Left ventricle myocardium inferior (tissue), 1 donor: ENCODE measurements at regions of chr5 and their contacts with region 1.

Region 1: GRCh38 chr5:112551419-112552032 is 132.4 kb upstream of the EPB41L4A start:
- DNase-seq: no peak
- H3K4me3 ChIP-seq: no peak overlapping the region
- H3K27ac ChIP-seq: no peak overlapping the region
- H3K4me1 ChIP-seq: peaks cover 8% of the 10 kb centered on the region
- H3K27me3 ChIP-seq: no peaks in the 10 kb centered on the region
- CTCF ChIP-seq: peak; percentile 84

Region 2: DNA sequence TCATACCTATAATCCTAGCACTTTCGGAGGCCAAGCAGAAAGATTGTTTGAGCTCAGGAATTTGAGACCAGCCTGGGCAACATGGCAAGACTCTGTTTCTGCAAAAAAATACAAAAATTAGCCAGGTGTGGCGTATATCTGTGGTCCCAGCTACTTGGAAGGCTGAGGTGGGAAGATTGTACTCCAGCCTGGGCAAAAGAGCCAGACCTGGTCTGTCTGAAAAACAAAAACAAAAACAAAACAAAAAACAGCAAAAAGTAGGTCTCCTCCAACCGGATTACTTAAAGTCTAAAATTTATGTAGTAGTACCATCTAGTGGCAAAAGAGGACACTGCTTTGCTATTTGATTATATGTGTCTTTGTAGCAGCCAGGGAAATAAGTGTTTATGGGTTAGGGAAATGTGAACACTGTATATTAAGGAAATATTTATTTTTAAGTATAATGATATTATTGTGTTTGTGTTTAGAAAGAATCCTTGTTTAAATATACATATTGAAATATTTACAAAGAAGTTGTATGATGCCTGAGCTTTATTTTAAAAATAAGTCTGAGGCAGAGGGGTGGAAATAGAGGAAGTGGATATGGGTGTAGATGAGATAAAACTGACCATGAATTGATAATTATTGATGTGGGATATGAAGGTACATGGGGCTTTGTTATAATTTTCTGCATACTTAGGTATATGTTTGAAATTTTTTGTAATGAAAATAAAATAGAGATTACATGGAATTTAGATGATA is 206.1 kb after region 1 on chr5:
- intact Hi-C with region 1: loop called (anchors 2 kb)
- DNase-seq: no peak
- H3K4me3 ChIP-seq: no peak overlapping the region
- H3K27ac ChIP-seq: peak overlapping the region; percentile 45
- H3K4me1 ChIP-seq: peaks cover 37% of the 10 kb centered on the region
- H3K27me3 ChIP-seq: no peaks in the 10 kb centered on the region
- CTCF ChIP-seq: peak; percentile 89